ENCODE measurements at regions of chr3 and their contacts with region 1.

Region 1: GRCh38 chr3:13895155-13896105 is 15.6 kb upstream of the WNT7A start:
- DNase-seq: peak; percentile 95
- H3K4me3 Mint-ChIP-seq: peak overlapping the region; percentile 81
- H3K27ac Mint-ChIP-seq: peak overlapping the region; percentile 88
- H3K4me1 Mint-ChIP-seq: peaks cover 4% of the 10 kb centered on the region
- H3K27me3 Mint-ChIP-seq: no peaks in the 10 kb centered on the region
- CTCF ChIP-seq: no peak

Region 2: DNA sequence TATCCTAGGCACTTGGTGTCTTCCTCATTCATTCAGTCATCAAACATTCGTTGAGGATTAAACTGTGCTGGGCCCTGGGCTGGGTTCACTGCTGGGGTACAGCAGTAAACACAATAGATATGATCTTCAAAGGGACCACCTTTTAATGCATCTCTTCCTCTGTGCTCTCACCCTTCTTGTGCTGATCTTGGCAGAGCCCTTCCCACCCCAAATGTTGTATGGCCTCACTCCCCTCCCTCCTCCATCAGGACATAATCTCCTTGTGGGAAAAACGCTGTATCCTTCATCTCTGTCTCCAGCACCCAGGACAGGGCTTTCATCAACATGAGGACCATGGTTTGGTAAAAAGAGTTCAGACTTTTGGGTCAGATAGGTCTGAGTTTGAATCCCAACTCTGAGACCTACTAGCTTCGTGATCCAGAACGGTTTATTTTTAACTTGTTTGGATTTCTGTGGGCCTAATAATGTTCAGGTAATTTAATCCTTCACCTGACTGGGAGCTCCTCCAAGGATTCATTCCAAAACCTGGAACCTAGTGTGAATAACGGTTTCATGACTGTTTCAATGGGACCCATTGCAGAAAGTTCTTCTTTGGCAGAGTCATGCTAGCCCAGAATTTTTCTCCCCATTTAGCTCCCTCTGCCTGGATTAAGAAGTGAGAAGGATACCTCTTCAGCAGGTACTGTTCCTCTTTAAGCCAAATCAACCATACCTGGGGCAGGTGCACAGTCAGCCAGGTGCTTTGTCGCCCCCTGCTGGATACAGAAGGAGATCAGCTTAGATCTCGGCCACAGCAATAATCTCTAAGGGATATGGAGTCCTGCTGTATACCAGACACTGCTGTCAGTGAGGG is 10.4 kb before region 1 on chr3:
- CTCF ChIA-PET with region 1: interaction called, 20 read pairs
- POLR2A ChIA-PET with region 1: no interaction called
- intact Hi-C with region 1: no loop called
- DNase-seq: peak; percentile 75
- H3K4me3 Mint-ChIP-seq: no peak overlapping the region
- H3K27ac Mint-ChIP-seq: no peak overlapping the region
- H3K4me1 Mint-ChIP-seq: peaks cover 1% of the 10 kb centered on the region
- H3K27me3 Mint-ChIP-seq: peaks cover 34% of the 10 kb centered on the region
- CTCF ChIP-seq: peak; percentile 82

Region 3: DNA sequence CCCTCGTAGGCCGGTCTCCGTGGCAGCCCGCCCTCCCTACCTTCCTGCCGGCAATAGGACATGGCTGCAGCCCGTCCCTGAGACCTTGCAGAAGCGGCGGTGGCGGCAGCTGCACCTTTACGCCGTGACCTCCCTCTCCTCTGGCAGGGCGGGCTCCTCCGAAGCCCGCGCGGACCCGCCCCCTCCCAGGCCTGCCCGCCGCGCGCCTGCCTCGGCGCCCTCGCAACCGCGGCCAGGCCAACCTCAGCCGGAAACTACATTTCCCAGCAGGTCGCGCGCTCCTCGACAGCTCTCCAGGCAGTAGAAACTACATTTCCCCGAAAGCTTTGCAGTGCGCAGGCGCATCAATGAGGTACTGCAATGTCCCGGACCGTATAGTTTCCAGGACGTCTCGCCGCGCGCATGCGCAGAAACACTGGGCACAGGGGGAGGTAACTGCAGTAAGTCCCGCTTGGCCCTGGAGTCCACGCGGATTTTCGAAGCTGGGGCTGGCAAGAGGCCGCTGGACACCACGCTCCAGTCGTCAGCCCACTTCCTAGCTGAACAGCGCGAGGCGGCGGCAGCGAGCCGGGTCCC is 229.3 kb after region 1 on chr3 and contains the starts of genes CHCHD4 and TMEM43:
- CTCF ChIA-PET with region 1: interaction called, 80 read pairs
- POLR2A ChIA-PET with region 1: interaction called, 65 read pairs
- intact Hi-C with region 1: loop called (anchors 1 kb)
- DNase-seq: peak; percentile 99
- H3K4me3 Mint-ChIP-seq: peak within 1 kb of the TSS; percentile 99
- H3K27ac Mint-ChIP-seq: peak within 1 kb of the TSS; percentile 96
- H3K4me1 Mint-ChIP-seq: peaks cover 30% of the 10 kb centered on the region
- H3K27me3 Mint-ChIP-seq: no peaks in the 10 kb centered on the region
- CTCF ChIP-seq: no peak
- total RNA-seq, gene CHCHD4: 31.6 and 35.0 TPM in 2 replicates
- total RNA-seq, gene TMEM43: 120 and 124 TPM in 2 replicates

Region 4: GRCh38 chr3:14178247-14179113 is 283.1 kb after region 1 on chr3 and contains the starts of genes LSM3 and XPC:
- CTCF ChIA-PET with region 1: interaction called, 8 read pairs
- POLR2A ChIA-PET with region 1: interaction called, 10 read pairs
- intact Hi-C with region 1: loop called (anchors 2 kb)
- DNase-seq: peak; percentile 99
- H3K4me3 Mint-ChIP-seq: peak within 1 kb of the TSS; percentile 85
- H3K27ac Mint-ChIP-seq: peak within 1 kb of the TSS; percentile 100
- H3K4me1 Mint-ChIP-seq: peaks cover 41% of the 10 kb centered on the region
- H3K27me3 Mint-ChIP-seq: no peaks in the 10 kb centered on the region
- CTCF ChIP-seq: no peak
- total RNA-seq, gene LSM3: 10.2 and 12.9 TPM in 2 replicates
- total RNA-seq, gene XPC: 73.3 and 83.6 TPM in 2 replicates

Region 5: DNA sequence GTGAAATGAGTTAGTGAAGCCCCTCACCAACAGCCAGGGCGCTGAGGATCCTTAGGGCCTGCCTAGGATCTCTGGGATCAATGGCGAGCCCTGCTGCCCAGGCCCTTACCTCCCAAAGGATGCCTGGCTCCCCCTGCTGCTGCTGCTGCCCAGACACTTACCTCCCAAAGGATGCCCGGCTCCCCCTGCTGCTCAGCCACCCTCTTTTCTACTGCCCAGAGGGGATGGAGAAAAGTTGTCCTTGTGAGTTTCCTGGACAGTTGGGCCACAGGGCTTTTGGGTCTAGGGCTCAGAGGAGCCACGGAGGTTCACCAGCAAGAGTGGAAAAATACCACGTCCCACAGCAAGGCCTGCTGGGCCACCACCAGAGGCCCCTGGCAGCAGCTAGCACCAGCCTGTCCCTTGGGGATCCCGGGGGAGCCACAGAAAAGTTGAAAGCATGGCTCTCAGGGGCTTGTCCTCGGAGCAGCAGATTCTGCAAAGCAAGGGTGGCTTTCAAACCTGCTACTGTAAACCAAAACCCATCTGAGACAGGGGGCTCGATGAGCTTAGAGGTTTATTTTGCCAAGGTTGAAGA is 566.4 kb after region 1 on chr3:
- CTCF ChIA-PET with region 1: interaction called, 5 read pairs
- POLR2A ChIA-PET with region 1: no interaction called
- intact Hi-C with region 1: loop called (anchors 1 kb)
- DNase-seq: peak; percentile 61
- H3K4me3 Mint-ChIP-seq: no peak overlapping the region
- H3K27ac Mint-ChIP-seq: no peak overlapping the region
- H3K4me1 Mint-ChIP-seq: peaks cover 12% of the 10 kb centered on the region
- H3K27me3 Mint-ChIP-seq: no peaks in the 10 kb centered on the region
- CTCF ChIP-seq: peak; percentile 89

Region 6: DNA sequence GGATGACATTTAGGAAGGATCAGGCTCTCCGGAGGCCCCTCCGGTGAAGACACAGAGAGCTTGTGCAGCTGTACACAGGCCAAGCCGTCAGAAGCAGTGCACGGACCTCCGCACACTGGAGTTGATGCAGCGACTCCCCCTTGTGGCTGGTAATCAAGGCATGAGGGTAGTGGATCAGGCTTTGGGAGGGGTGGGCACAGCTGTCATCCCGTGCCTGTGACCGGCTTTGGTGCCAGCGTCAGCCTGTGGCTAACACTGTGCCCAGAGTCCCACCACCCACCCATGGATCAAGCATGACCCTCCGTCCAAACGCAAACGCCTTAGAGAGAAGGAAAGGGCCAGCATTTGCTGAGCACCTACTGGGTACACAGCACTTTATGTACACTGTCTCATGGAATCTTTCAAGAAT is 652.9 kb after region 1 on chr3:
- CTCF ChIA-PET with region 1: no interaction called
- POLR2A ChIA-PET with region 1: no interaction called
- intact Hi-C with region 1: loop called (anchors 10 kb)
- DNase-seq: peak; percentile 66
- H3K4me3 Mint-ChIP-seq: no peak overlapping the region
- H3K27ac Mint-ChIP-seq: no peak overlapping the region
- H3K4me1 Mint-ChIP-seq: peaks cover 13% of the 10 kb centered on the region
- H3K27me3 Mint-ChIP-seq: peaks cover 17% of the 10 kb centered on the region
- CTCF ChIP-seq: peak; percentile 53

Measured in MCF 10A (cell line).